ENCODE measurements at regions of chr22 and their contacts with region 1.

Region 1: DNA sequence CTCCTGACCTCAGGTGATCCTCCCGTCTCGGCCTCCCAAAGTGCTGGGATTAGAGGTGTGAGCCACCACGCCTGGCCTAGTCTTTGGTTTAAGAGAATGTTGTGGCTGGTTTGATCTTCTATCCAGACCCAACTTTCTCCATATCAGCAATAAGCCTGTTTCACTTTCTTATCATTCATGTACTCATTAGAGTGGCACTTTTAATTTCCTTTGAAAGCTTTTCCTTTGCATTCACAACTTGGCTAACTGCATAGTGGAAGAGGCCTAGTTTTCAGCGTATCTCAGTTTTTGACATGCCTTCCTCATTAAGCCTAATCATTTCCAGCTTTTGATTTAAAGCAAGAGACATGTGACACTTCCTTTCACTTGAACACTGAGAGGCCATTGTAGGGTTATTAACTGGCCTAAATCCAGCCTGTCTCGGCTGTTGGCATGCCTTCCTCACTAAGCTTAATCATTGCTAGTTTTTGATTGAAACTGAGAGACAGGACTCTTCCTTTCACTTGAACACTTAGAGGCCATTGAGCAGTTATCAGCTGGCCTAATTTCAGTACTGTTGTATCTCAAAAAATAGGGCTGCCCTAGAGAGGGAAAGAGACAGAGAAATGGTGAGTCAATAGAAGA is 13.1 kb upstream of the RPL3 start:
- DNase-seq: no peak
- ATAC-seq: peak; percentile 34
- H3K4me3 Mint-ChIP-seq: no peak overlapping the region
- H3K27ac Mint-ChIP-seq: no peak overlapping the region
- H3K4me1 Mint-ChIP-seq: peaks cover 16% of the 10 kb centered on the region
- H3K27me3 Mint-ChIP-seq: no peaks in the 10 kb centered on the region
- CTCF ChIP-seq: no peak

Region 2: DNA sequence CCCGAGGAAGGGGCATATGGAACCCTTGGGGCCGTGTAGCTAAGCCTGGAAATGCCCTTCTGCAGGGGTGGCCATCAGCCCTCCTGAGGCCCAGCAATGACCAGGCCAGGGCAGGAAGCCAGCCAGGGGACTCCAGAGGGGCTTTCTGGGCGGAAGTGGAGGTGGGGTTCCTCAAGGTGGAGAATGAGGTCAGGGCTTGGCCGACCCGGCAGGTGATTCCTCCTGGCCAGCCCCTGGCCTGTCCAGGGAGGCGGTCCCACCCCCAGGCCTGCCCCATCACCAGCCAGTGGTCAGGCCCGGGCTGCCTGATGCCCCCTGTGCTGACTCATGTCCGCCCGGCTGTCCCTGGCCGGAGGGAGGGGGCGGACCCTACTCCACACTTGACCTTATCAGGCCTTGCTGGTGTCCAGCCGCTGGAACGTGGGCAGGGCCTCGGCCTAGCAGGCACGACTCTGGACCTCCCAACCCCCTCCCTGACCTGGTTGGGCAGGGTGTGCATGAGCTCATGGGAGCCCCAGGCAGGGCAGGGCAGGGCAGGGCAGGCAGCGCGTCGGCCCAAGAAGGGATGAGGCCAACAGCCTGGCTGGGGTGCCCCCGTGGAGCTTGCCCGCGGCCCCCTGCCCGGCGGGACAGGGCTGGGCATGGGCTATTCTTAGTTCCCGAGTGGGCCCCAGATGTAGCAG is 49.1 kb before region 1 on chr22:
- CTCF ChIA-PET with region 1: no interaction called
- POLR2A ChIA-PET with region 1: no interaction called
- intact Hi-C with region 1: no loop called
- DNase-seq: no peak
- ATAC-seq: no peak
- H3K4me3 Mint-ChIP-seq: no peak overlapping the region
- H3K27ac Mint-ChIP-seq: no peak overlapping the region
- H3K4me1 Mint-ChIP-seq: peaks cover 2% of the 10 kb centered on the region
- H3K27me3 Mint-ChIP-seq: peaks cover 2% of the 10 kb centered on the region
- CTCF ChIP-seq: no peak

Region 3: GRCh38 chr22:39343259-39344048 is 10.9 kb after region 1 on chr22:
- CTCF ChIA-PET with region 1: interaction called, 66 read pairs
- POLR2A ChIA-PET with region 1: no interaction called
- intact Hi-C with region 1: no loop called
- DNase-seq: peak; percentile 69
- ATAC-seq: peak; percentile 77
- H3K4me3 Mint-ChIP-seq: no peak overlapping the region
- H3K27ac Mint-ChIP-seq: no peak overlapping the region
- H3K4me1 Mint-ChIP-seq: peaks cover 4% of the 10 kb centered on the region
- H3K27me3 Mint-ChIP-seq: peaks cover 8% of the 10 kb centered on the region
- CTCF ChIP-seq: peak; percentile 72

Region 4: DNA sequence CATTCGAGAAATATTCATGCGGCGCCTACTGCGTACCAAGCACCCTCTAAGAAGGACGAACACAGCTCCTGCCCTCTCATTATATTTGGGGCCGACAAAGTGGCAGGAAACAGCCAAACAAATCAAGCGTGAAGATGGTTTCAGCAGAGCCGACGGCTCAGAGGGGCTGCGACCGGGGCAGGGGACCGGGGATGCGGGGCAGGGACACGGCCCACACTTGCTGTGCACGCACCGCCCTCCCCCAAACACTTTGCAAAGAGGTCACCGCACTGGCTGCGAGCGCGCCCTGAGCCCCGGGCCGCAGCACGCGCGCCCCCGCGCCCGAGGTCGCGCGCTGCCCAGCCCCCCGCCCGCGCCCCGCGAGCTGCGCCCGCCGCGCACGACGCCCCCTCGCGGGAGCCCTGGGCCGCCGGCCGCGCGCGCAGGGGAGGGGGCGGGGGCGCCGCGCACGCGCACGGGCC is 17.0 kb after region 1 on chr22:
- CTCF ChIA-PET with region 1: interaction called, 13 read pairs
- POLR2A ChIA-PET with region 1: no interaction called
- intact Hi-C with region 1: no loop called
- DNase-seq: peak; percentile 49
- ATAC-seq: peak; percentile 68
- H3K4me3 Mint-ChIP-seq: peak overlapping the region; percentile 82
- H3K27ac Mint-ChIP-seq: peak overlapping the region; percentile 76
- H3K4me1 Mint-ChIP-seq: peaks cover 11% of the 10 kb centered on the region
- H3K27me3 Mint-ChIP-seq: peaks cover 10% of the 10 kb centered on the region
- CTCF ChIP-seq: no peak